ENCODE measurements at regions of chr10 and their contacts with region 1.

Region 1: GRCh38 chr10:25441270-25441669 is 266.5 kb downstream of the GPR158 start:
- DNase-seq: no peak
- ATAC-seq: peak; percentile 54 to 86

Region 2: DNA sequence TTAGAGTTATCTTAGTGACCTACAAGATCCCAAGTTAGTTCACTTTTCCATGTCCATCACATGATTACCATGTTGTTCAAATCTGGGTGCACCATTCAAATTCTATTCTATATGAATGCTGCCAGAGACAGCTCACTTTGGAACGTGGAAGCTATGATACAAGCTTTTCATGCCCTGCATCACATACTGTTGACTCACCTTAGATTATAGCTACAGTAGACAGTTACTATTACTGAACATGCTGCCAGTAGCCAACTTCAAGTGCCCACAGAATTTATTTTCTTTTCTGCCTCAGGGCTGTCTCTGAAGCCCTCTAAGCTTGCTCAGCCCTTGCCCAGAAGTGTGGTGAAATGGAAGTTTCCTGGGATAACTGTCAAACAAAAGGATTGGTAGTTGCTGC is 35.4 kb before region 1 on chr10:
- intact Hi-C with region 1: no loop called
- DNase-seq: no peak
- ATAC-seq: no peak

Region 3: GRCh38 chr10:25493122-25494009 is 52.1 kb after region 1 on chr10:
- intact Hi-C with region 1: loop called in 1 of 2 experiments (anchors 5 kb)
- DNase-seq: no peak
- ATAC-seq: peak; percentile 97 to 99